Activated CD4-positive, alpha-beta T cell treated with anti-CD3 and anti-CD28 coated beads for 36 hours (primary cell): ENCODE measurements at regions of chr19 and their contacts with region 1.

Region 1: DNA sequence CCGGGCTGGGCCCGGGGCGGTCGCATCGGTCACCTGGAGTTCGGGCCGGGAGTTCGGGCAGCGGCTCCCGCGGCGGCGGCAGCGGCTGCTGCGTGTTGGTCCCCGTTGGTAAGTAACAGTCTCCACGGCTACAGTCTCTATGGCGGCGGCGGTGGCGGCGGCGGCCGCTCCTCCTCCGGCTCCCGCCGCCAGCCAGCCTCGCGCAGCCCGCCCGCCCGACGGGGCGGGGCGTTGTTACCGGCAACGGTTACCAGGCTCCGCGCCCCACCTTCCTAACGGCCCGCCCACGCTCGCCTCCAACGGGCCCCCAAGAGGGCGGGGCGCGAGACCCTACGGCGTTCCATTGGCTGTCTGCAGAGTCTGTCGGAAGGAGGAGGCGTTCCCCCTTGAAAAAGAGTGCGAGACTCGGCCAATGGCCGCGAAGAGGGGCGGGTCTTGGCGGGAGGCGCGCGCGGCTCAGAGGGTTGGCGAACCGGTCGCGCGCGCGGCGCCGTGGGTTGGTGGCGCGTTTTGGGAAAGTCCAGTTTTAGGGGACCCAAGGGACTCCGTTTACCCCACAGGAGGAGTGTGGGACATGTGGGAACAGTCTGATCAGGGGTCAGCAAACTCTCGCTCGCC is at the start of gene RFX2:
- DNase-seq: peak; percentile 100
- ATAC-seq: peak; percentile 98
- H3K4me3 Mint-ChIP-seq: peak within 1 kb of the TSS; percentile 76
- H3K27ac Mint-ChIP-seq: peak within 1 kb of the TSS; percentile 60
- H3K4me1 Mint-ChIP-seq: peaks cover 23% of the 10 kb centered on the region
- H3K27me3 Mint-ChIP-seq: peaks cover 16% of the 10 kb centered on the region
- total RNA-seq, gene RFX2: 8.6 to 8.9 TPM

Region 2: DNA sequence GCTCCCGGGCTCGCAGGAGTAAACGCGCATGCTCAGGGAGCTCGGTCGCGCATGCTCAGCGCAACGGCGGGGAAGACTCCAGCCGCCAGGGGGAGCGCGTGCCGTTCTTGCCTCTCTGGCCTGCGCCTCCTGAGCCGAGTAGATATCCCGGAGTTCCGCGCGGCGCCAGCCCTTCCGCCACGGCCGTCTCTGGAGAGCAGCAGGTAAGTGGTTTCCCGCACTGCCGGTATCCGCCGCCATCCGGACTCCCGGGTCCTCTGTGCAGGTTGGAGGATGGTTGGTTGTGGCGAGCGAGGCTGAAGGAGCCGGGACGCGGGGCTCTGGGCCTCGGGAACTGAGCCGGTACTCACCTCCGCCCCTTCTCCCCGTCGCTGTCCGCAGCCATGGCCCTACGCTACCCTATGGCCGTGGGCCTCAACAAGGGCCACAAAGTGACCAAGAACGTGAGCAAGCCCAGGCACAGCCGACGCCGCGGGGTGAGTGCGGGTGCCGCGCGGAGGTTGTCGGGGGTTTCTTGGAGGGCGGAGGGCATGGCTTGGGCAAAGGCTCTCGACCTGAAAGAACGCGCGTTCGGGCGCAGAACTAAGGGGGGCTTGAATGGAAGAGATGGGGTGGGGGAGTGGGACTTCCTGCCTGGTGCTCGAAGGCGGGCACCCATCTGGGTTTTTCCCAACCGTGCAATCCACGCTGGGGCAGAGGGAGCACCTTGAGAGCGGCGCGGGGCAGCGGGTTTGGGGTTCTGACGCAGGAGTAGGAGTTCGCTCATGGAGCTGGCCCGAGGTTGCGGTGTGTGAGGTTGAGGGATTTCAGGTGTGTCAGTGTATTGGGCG is 420.1 kb before region 1 on chr19 and contains the start of gene RPL36:
- CTCF ChIA-PET with region 1: no interaction called
- POLR2A ChIA-PET with region 1: no interaction called
- intact Hi-C with region 1: loop called in 1 of 2 experiments (anchors 1 kb)
- DNase-seq: peak; percentile 100
- ATAC-seq: peak; percentile 54
- H3K4me3 Mint-ChIP-seq: peak within 1 kb of the TSS; percentile 100
- H3K27ac Mint-ChIP-seq: peak within 1 kb of the TSS; percentile 96
- H3K4me1 Mint-ChIP-seq: peaks cover 21% of the 10 kb centered on the region
- H3K27me3 Mint-ChIP-seq: no peaks in the 10 kb centered on the region
- total RNA-seq, gene RPL36: 1,452 to 1,530 TPM

Region 3: DNA sequence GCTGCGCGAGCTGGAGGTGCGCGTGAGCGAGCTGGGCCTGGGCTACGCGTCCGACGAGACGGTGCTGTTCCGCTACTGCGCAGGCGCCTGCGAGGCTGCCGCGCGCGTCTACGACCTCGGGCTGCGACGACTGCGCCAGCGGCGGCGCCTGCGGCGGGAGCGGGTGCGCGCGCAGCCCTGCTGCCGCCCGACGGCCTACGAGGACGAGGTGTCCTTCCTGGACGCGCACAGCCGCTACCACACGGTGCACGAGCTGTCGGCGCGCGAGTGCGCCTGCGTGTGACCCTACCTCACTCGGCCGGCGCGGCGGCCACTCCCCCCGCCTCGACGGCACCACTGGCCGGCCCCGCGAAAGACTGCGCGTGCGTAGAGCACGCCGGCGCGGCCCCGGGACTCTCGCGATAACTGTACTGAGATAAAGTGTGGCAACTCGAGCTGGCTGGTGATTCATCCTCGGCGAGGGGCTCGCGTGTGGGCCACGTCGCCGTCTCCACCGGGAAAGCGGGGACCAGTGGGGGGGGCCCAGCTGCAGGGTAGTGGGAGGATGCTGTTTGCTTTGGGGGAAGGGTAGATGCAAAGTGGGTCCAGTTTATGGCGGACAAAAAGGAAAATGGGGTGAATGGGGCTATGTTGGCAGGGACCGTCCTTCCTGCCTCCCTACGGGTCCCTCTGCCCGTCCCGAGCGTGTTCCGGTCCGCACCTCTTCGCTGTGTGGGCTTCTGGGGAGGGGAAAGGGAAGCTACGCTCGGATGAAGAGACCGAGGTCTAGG is 282.4 kb before region 1 on chr19:
- CTCF ChIA-PET with region 1: interaction called, 3 read pairs
- POLR2A ChIA-PET with region 1: no interaction called
- intact Hi-C with region 1: loop called in 1 of 2 experiments (anchors 1 kb)
- DNase-seq: peak; percentile 98
- ATAC-seq: peak; percentile 84
- H3K4me3 Mint-ChIP-seq: peak overlapping the region; percentile 92
- H3K27ac Mint-ChIP-seq: peak overlapping the region; percentile 96
- H3K4me1 Mint-ChIP-seq: peaks cover 4% of the 10 kb centered on the region
- H3K27me3 Mint-ChIP-seq: no peaks in the 10 kb centered on the region

Region 4: GRCh38 chr19:6100284-6100915 is 10.1 kb before region 1 on chr19:
- CTCF ChIA-PET with region 1: no interaction called
- POLR2A ChIA-PET with region 1: no interaction called
- intact Hi-C with region 1: no loop called
- DNase-seq: peak; percentile 53
- ATAC-seq: peak; percentile 55
- H3K4me3 Mint-ChIP-seq: peak overlapping the region; percentile 37
- H3K27ac Mint-ChIP-seq: peak overlapping the region; percentile 74
- H3K4me1 Mint-ChIP-seq: peaks cover 7% of the 10 kb centered on the region
- H3K27me3 Mint-ChIP-seq: no peaks in the 10 kb centered on the region

Region 5: GRCh38 chr19:6199240-6199983 is 88.9 kb after region 1 on chr19:
- CTCF ChIA-PET with region 1: no interaction called
- POLR2A ChIA-PET with region 1: no interaction called
- intact Hi-C with region 1: loop called in 1 of 2 experiments (anchors 1 kb)
- DNase-seq: peak; percentile 100
- ATAC-seq: peak; percentile 95
- H3K4me3 Mint-ChIP-seq: peak overlapping the region; percentile 100
- H3K27ac Mint-ChIP-seq: peak overlapping the region; percentile 92
- H3K4me1 Mint-ChIP-seq: peaks cover 12% of the 10 kb centered on the region
- H3K27me3 Mint-ChIP-seq: no peaks in the 10 kb centered on the region

Region 6: DNA sequence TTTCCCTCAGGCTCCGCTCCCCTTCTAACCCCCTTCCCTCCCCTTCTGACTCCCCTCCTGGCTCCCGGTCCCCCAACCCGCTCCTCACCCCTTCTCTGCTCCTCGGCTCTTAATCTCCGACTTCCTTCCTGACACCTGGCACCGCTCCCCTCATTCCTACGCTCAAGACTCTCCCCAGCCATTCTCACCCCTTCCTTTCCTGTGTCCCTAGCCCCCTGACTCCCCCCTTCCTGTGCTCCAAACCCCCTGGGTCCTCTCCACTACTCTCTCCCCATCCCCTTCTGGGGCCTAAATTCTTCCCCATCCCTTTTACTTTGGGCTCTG is 251.5 kb after region 1 on chr19:
- CTCF ChIA-PET with region 1: no interaction called
- POLR2A ChIA-PET with region 1: no interaction called
- intact Hi-C with region 1: loop called in 1 of 2 experiments (anchors 1 kb)
- DNase-seq: no peak
- ATAC-seq: peak; percentile 1
- H3K4me3 Mint-ChIP-seq: peak overlapping the region; percentile 85
- H3K27ac Mint-ChIP-seq: peak overlapping the region; percentile 91
- H3K4me1 Mint-ChIP-seq: peaks cover 16% of the 10 kb centered on the region
- H3K27me3 Mint-ChIP-seq: no peaks in the 10 kb centered on the region

Region 7: DNA sequence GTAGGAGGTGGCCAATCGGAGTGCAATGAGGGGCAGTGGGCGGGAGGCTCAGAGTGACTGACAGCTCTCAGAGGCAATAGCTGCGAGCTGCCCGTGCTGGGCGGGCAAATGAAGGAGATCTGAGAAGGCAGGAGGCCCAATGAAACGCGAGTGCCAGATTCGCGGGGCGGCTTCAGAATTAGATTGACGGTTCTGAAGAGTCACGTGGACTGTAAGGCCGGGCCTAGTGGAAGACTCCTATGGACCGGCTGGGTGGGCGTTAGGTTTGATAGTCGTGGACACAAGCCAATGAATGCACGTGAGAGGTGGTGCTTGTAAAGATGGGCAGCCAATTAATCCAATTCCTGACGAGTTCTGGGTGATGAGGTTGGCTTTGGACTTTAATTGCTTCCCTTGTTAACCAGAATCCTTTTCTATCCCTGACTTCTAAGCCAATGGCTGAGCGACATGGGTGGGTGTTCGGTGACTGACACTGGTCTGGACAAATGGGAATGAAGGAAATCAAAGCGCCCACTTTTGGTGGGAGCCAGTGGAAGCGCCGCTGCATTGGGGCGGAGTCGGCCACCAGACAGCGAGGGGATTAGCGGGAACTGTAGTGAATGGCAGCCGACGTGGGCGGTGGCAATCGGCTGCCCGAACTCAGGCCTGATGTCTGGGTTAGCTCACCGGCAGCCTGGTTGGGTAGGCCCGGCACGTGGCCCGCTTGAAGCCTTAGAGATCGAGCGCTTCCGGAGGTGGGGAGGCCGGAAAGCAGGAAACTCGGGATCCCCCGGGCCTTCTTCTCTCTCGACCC is 314.7 kb after region 1 on chr19:
- CTCF ChIA-PET with region 1: no interaction called
- POLR2A ChIA-PET with region 1: no interaction called
- intact Hi-C with region 1: loop called in 1 of 2 experiments (anchors 1 kb)
- DNase-seq: peak; percentile 100
- ATAC-seq: peak; percentile 88
- H3K4me3 Mint-ChIP-seq: peak overlapping the region; percentile 73
- H3K27ac Mint-ChIP-seq: peak overlapping the region; percentile 98
- H3K4me1 Mint-ChIP-seq: peaks cover 31% of the 10 kb centered on the region
- H3K27me3 Mint-ChIP-seq: no peaks in the 10 kb centered on the region